ENCODE measurements at regions of chr4 and their contacts with region 1.

Region 1: GRCh38 chr4:99894161-99894997 is at the start of gene LAMTOR3:
- DNase-seq: peak; percentile 94
- ATAC-seq: peak; percentile 99
- total RNA-seq, gene LAMTOR3: 31.4 TPM

Region 2: DNA sequence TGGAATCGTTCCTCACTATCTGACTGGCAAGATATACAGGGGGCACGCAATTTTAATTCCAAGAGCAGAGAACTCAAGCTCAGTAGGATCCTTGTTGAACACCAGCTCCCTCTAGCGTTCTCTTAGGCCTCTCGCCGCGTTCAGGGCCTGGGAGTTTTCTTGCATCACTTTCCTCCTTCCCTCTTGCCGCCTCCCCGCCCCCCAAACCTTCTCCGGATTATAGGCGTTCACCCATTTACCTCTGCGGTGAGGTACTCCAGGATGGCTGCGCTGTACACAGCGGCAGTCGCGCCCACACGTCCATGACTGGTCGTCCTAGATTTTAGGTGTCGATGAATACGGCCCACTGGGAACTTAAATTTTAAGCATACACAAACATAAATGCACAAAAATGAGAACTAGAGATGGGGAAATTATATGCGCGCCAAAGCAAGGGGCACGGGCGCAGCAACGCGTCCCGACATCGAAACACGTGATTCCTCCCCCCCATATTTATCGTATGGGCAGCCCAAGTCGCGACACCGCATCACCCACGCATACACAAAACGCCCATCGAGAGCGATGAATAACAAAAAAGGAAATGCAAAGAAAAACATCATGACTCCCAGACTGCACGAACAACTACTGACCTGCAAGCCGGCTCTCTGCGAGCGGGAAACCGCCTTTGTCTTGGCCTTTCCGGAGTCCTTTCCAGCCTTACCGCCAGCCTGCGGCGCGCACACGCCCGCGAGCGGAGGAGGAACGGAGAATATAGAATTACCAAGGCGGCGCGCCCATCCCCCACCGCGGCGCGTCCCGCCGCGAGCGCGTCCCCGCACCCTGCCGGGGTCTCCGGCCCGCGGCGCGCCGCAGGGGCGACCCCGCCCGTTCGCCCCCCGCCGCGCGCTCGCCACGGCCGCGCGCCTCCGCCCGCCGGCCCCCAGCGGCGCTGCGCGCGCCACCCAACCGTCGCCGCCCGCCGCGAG is 54.9 kb after region 1 on chr4:
- intact Hi-C with region 1: loop called (anchors 2 kb)
- DNase-seq: peak; percentile 88
- ATAC-seq: peak; percentile 47

Region 3: GRCh38 chr4:100082852-100083251 is 188.5 kb after region 1 on chr4:
- intact Hi-C with region 1: no loop called
- DNase-seq: no peak
- ATAC-seq: no peak